HepG2 (cell line): ENCODE measurements at regions of chr7 and their contacts with region 1.

Region 1: DNA sequence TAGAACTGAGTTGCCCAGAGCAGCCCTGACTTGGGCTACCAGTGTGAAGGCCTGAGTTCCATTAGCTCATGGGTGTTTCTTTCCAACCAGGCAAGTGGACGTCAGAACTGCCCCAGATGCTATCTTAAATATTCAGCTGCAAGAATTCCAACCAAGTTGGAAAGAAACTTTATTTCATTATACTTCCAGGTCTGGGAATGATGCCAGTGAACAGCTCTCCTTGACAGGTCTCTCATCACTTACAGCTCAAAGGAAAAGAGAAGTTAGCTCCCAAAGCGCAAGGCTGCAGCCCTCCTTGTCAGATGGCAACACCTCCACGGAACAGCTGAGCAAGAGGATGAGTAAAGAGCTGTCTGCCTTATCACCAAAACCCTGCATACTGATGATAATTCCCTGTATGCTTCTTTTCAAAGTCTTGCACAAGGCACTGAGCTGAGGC is 255.5 kb upstream of the AOAH start:
- DNase-seq: no peak
- ATAC-seq: no peak
- H3K4me3 ChIP-seq: no peak overlapping the region
- H3K27ac ChIP-seq: no peak overlapping the region
- H3K4me1 ChIP-seq: peaks cover 54% of the 10 kb centered on the region
- H3K27me3 ChIP-seq: no peaks in the 10 kb centered on the region
- CTCF ChIP-seq: no peak
- EP300 ChIP-seq: no peak
- POLR2A ChIP-seq: no peak
- RAD21 ChIP-seq: no peak

Region 2: GRCh38 chr7:36937754-36938563 is 41.9 kb before region 1 on chr7:
- CTCF ChIA-PET with region 1: no interaction called
- POLR2A ChIA-PET with region 1: no interaction called
- in situ Hi-C with region 1: no loop called
- intact Hi-C with region 1: no loop called
- DNase-seq: no peak
- ATAC-seq: peak; percentile 80
- H3K4me3 ChIP-seq: no peak overlapping the region
- H3K27ac ChIP-seq: no peak overlapping the region
- H3K4me1 ChIP-seq: peaks cover 15% of the 10 kb centered on the region
- H3K27me3 ChIP-seq: peaks cover 0 to 3% of the 10 kb centered on the region in 2 experiments; a peak in 1 of 5 replicates
- CTCF ChIP-seq: no peak
- EP300 ChIP-seq: no peak
- POLR2A ChIP-seq: no peak
- RAD21 ChIP-seq: no peak

Region 3: GRCh38 chr7:37031571-37032257 is 51.9 kb after region 1 on chr7:
- CTCF ChIA-PET with region 1: no interaction called
- POLR2A ChIA-PET with region 1: no interaction called
- in situ Hi-C with region 1: no loop called
- intact Hi-C with region 1: loop called (anchors 10 kb)
- DNase-seq: peak; percentile 97
- ATAC-seq: peak; percentile 100
- H3K4me3 ChIP-seq: no peak overlapping the region
- H3K27ac ChIP-seq: peak overlapping the region; percentile 48
- H3K4me1 ChIP-seq: peaks cover 24% of the 10 kb centered on the region
- H3K27me3 ChIP-seq: no peaks in the 10 kb centered on the region
- CTCF ChIP-seq: no peak
- EP300 ChIP-seq: peak in 1 of 2 experiments; percentile 69; a peak in 1 of 4 replicates
- POLR2A ChIP-seq: no peak
- RAD21 ChIP-seq: no peak